Head of caudate nucleus (tissue), 42 donors: ENCODE measurements at regions of chr3 and their contacts with region 1.

Region 1: GRCh38 chr3:133040696-133041523 is 2.7 kb downstream of the TMEM108 start:
- DNase-seq: peak; percentile 64 to 94 (median 84)

Region 2: DNA sequence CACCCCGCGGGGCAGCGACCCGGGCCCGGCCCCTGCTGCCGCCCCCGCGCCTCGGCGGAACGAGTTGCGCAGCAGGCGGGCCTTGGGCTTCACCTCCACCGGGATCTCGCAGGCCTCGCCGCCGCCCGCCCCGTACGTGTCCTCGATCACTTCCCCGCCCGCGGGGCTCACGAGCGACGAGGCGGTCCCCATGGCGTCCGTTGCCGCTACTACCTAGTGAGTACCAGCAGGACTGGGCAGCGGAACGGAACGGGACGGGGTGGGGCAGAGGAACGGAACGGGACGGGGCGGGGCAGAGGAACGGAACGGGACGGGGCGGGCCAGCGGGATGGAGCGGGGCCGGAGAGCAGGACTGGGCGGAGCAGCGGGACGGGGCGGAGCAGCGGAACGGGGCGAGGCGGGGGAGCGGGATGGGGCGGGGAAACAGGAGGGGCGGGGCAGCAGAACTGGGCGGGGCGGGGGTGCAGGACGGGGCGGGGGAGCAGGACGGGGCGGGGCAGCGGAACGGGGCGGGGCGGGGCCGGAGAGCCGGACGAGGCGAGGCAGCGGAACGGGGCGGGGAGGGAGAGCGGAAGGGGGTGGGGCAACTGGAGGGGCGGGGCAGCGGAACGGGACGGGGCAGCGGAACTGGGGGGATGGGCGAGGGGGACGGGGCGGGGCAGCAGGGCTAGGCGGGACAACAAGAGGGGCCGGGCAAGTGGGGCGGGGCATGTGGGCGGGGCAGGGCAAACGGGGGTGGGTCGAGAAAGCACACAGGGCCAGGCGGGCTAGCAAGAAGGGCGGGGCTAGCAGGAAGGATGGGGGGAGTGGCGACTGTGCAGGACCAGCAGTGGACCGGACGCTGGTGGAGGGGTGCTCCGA is 318.5 kb before region 1 on chr3 and contains the start of gene NPHP3:
- intact Hi-C with region 1: loop called (anchors 5 kb)
- DNase-seq: peak; percentile 88 to 100 (median 98)

Region 3: GRCh38 chr3:132972333-132972732 is 68.6 kb before region 1 on chr3:
- intact Hi-C with region 1: no loop called
- DNase-seq: no peak

Region 4: DNA sequence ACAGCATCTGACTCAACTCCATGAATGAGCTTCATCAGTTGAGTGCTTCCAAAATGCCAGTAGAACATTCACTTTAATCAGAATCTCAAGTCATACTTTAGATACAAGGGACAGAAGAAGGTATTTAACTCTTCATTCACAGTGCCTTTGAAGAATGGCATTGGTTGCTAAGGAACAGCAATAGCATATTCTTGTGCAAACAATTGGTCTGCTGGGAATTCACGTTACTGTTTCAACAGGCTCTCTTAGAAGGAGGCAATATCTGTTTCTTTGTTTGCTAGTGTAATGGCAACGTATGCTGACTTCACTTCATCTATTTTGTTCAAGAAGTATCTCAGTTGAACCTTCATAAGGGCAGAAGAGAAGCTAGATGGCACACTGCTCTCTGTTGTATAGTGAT is 111.1 kb after region 1 on chr3:
- intact Hi-C with region 1: no loop called
- DNase-seq: no peak

Region 5: GRCh38 chr3:133377396-133377795 is 336.5 kb after region 1 on chr3:
- intact Hi-C with region 1: loop called (anchors 5 kb)
- DNase-seq: peak in 15 of 42 donors; percentile 8 to 67 (median 38)